Naive thymus-derived CD4-positive, alpha-beta T cell (primary cell): ENCODE measurements at regions of chr18 and their contacts with region 1.

Region 1: GRCh38 chr18:2741651-2742050 is 86.1 kb downstream of the SMCHD1 start:
- DNase-seq: no peak
- ATAC-seq: no peak
- H3K4me3 ChIP-seq: no peak overlapping the region
- H3K4me3 Mint-ChIP-seq: no peak overlapping the region
- H3K27ac ChIP-seq: no peak overlapping the region
- H3K27ac Mint-ChIP-seq: peak overlapping the region in 5 of 9 donors; percentile 19 to 74 (median 37)
- H3K4me1 ChIP-seq: no peaks in the 10 kb centered on the region
- H3K4me1 Mint-ChIP-seq: peaks cover 4 to 39% (median 23%) of the 10 kb centered on the region in 7 donors
- H3K27me3 ChIP-seq: no peaks in the 10 kb centered on the region
- H3K27me3 Mint-ChIP-seq: no peaks in the 10 kb centered on the region

Region 2: GRCh38 chr18:2406544-2406943 is 335.1 kb before region 1 on chr18:
- CTCF ChIA-PET with region 1: no interaction called
- POLR2A ChIA-PET with region 1: no interaction called
- intact Hi-C with region 1: no loop called
- DNase-seq: no peak
- ATAC-seq: no peak
- H3K4me3 ChIP-seq: no peak overlapping the region
- H3K4me3 Mint-ChIP-seq: no peak overlapping the region
- H3K27ac ChIP-seq: no peak overlapping the region
- H3K27ac Mint-ChIP-seq: no peak overlapping the region
- H3K4me1 ChIP-seq: no peaks in the 10 kb centered on the region
- H3K4me1 Mint-ChIP-seq: peaks cover 0 to 2% (median 0%) of the 10 kb centered on the region in 7 donors
- H3K27me3 ChIP-seq: no peaks in the 10 kb centered on the region
- H3K27me3 Mint-ChIP-seq: peaks cover 0 to 25% (median 0%) of the 10 kb centered on the region in 5 donors

Region 3: GRCh38 chr18:2723207-2723606 is 18.4 kb before region 1 on chr18:
- CTCF ChIA-PET with region 1: no interaction called
- POLR2A ChIA-PET with region 1: no interaction called
- intact Hi-C with region 1: loop called in 1 of 2 experiments (anchors 2 kb)
- DNase-seq: no peak
- ATAC-seq: no peak
- H3K4me3 ChIP-seq: no peak overlapping the region
- H3K4me3 Mint-ChIP-seq: peak overlapping the region in 1 of 10 donors; percentile 27
- H3K27ac ChIP-seq: no peak overlapping the region
- H3K27ac Mint-ChIP-seq: peak overlapping the region; percentile 36 to 91 (median 52)
- H3K4me1 ChIP-seq: peaks cover 0 to 5% of the 10 kb centered on the region in 2 donors
- H3K4me1 Mint-ChIP-seq: peaks cover 21 to 55% (median 46%) of the 10 kb centered on the region in 7 donors
- H3K27me3 ChIP-seq: no peaks in the 10 kb centered on the region
- H3K27me3 Mint-ChIP-seq: no peaks in the 10 kb centered on the region

Region 4: GRCh38 chr18:2758309-2758708 is 16.7 kb after region 1 on chr18:
- CTCF ChIA-PET with region 1: interaction called, 3 read pairs
- POLR2A ChIA-PET with region 1: no interaction called
- intact Hi-C with region 1: loop called in 1 of 2 experiments (anchors 2 kb)
- DNase-seq: no peak
- ATAC-seq: no peak
- H3K4me3 ChIP-seq: no peak overlapping the region
- H3K4me3 Mint-ChIP-seq: peak overlapping the region in 1 of 10 donors; percentile 16
- H3K27ac ChIP-seq: no peak overlapping the region
- H3K27ac Mint-ChIP-seq: peak overlapping the region in 7 of 9 donors; percentile 34 to 84 (median 69)
- H3K4me1 ChIP-seq: peaks cover 8 to 10% of the 10 kb centered on the region in 2 donors
- H3K4me1 Mint-ChIP-seq: peaks cover 11 to 36% (median 34%) of the 10 kb centered on the region in 7 donors
- H3K27me3 ChIP-seq: no peaks in the 10 kb centered on the region
- H3K27me3 Mint-ChIP-seq: no peaks in the 10 kb centered on the region

Region 5: DNA sequence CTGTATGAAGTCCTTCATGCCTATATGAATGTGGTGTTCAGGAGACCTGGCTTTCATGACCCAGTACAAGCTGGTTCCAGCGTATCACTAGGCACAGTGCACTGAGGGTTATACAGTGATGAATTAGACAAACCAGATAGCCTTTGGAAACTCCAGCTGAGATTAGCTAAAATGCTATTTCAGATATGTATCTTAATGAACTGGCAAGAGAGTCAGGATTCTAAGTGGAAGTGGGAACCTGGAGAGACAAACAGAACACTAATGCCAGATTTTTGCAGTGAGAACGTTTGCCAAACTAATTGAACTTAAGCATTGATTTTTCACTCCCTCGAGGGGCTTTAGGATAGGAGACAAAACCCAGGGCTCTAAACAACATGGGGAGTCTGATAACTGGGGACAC is 39.1 kb after region 1 on chr18:
- CTCF ChIA-PET with region 1: no interaction called
- POLR2A ChIA-PET with region 1: interaction called, 3 read pairs
- intact Hi-C with region 1: loop called in 1 of 2 experiments (anchors 5 kb)
- DNase-seq: no peak
- ATAC-seq: no peak
- H3K4me3 ChIP-seq: no peak overlapping the region
- H3K4me3 Mint-ChIP-seq: no peak overlapping the region
- H3K27ac ChIP-seq: no peak overlapping the region
- H3K27ac Mint-ChIP-seq: peak overlapping the region in 7 of 9 donors; percentile 8 to 68 (median 38)
- H3K4me1 ChIP-seq: no peaks in the 10 kb centered on the region
- H3K4me1 Mint-ChIP-seq: peaks cover 0 to 15% (median 4%) of the 10 kb centered on the region in 7 donors
- H3K27me3 ChIP-seq: no peaks in the 10 kb centered on the region
- H3K27me3 Mint-ChIP-seq: no peaks in the 10 kb centered on the region

Region 6: DNA sequence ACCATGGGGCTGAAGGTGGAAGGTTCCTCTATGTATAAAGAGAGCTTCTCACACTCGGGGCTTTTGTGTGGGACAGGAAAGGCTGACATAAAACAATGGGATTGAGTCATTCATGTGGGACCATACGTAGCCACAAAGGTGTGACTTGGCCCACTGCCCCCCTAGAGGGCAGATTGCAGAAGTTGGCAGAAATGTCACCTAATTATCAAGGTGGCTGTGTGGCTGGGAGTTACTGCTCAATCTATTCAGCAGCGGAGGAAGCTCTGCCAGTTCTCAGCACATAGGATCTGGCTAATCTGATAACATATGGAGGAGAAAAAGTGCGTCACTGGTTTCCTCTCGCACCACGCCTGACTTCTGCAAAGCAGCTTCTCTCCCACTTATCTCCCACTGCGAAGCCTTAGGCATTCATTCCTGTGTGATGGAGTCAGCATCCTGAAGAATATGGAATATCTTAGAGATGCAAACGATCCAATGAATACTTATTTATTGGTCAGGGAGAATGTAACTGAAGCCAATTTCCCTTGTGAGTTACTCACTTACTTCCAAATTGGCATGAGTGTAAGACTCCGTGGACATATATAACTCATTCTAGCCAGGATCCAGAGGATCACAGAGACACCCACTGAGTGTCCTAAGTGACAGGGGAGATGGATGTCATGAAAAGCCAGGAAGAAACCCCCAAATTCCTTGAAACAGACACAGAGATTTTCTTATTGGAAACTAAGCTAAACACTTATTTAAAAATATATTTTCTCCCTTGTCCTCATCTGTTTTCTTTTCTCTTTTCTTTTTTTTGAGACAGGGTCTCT is 1053.1 kb after region 1 on chr18:
- CTCF ChIA-PET with region 1: no interaction called
- POLR2A ChIA-PET with region 1: no interaction called
- intact Hi-C with region 1: no loop called
- DNase-seq: no peak
- ATAC-seq: peak; percentile 16
- H3K4me3 ChIP-seq: no peak overlapping the region
- H3K4me3 Mint-ChIP-seq: no peak overlapping the region
- H3K27ac ChIP-seq: no peak overlapping the region
- H3K27ac Mint-ChIP-seq: no peak overlapping the region
- H3K4me1 ChIP-seq: no peaks in the 10 kb centered on the region
- H3K4me1 Mint-ChIP-seq: peaks cover 0 to 7% (median 0%) of the 10 kb centered on the region in 7 donors
- H3K27me3 ChIP-seq: no peaks in the 10 kb centered on the region
- H3K27me3 Mint-ChIP-seq: peaks cover 0 to 41% (median 18%) of the 10 kb centered on the region in 5 donors